Psoas muscle (tissue), 8 donors: ENCODE measurements at regions of chr12 and their contacts with region 1.

Region 1: DNA sequence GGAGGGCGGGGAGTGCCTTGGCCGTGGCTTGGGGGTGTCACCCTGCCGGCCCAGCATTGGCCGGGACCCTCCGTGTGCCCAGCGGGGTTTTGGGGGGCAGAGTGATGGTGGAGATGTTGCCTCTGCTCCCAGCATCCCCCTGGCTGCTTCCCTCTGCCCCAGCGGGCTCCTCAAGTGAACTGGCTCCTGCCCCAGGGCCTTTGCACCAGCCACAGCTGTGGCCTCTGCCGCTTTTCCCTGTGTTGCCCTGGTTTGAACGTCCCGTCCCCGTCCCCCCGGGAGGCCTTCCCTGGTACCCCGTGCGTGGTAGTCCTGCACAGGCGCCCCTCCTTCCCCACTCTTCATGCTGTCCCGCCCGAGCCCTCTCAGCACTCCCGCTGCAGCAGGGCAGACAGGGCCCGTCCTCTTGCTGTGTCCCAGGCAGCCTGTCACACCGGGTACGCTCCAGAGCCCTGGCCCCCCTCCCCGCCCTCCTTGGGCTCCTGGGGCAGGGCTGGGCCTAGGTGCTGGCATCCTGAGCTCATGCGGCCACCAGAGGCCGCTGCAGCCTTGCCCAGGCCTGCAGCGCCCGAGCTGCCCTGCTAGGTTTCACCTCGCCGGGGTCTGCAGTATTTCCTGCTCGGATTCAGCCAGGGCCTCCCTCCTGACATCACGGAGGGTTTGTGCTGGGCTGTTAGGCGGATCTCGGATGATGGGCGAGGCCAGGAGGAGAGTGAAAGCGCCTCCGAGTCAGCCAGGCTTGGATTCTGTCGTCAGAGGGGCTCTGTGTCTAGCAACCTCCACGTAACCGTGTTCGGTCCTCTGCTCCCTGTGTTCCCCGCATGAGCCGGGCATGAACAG is 9.5 kb downstream of the NOC4L start:
- DNase-seq: peak; percentile 61 to 80
- ATAC-seq: peak; percentile 90 to 94 (median 93)
- H3K4me3 ChIP-seq: peak overlapping the region; percentile 29
- H3K27ac ChIP-seq: no peak overlapping the region
- H3K4me1 ChIP-seq: no peaks in the 10 kb centered on the region
- H3K27me3 ChIP-seq: no peaks in the 10 kb centered on the region
- CTCF ChIP-seq: peak; percentile 85

Region 2: DNA sequence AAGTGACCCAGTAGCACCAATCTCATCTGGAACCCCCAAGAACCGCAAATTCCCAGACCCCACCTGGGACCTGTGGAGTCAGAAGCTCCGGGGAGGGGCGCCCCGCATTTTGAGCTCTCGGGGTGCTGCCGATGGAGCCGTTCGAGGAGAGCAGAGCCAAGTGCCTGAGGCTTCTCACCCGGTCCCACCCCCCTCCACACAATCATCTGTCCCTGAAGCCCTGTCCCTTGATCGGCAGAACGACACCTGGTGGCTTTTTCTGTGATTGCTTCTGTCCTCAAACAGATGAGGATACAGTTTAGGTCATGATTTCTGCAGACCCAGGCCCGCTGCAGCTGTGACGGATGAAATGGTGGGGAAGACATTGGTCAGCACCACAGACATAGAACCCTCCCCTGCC is 65.2 kb after region 1 on chr12:
- intact Hi-C with region 1: loop called in 1 of 2 experiments (anchors 2 kb)
- DNase-seq: no peak
- ATAC-seq: no peak
- H3K4me3 ChIP-seq: no peak overlapping the region
- H3K27ac ChIP-seq: no peak overlapping the region
- H3K4me1 ChIP-seq: no peaks in the 10 kb centered on the region
- H3K27me3 ChIP-seq: peaks cover 0 to 57% (median 10%) of the 10 kb centered on the region in 3 donors
- CTCF ChIP-seq: peak; percentile 17

Region 3: DNA sequence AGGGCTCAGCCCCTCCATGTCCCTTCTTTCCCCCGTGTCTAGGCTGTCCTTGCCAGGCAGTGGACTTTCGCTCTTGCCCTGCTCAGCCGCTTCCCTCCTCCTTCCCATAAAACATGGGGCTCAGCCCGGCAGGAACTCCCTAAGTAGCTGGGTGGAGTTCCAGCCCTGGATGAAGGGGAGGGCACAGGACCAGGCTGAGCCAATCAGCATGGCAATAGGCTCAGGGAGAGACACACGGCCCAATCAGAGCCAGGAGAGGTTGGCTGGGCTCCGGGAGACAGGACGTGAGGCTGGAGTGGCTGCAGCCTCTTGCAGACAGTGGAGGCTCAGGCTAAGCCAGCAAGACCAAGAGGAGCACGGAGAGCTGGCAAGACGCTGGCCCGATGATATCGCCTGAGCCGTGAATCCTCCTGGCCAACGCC is 121.4 kb after region 1 on chr12:
- intact Hi-C with region 1: no loop called
- DNase-seq: no peak
- ATAC-seq: no peak
- H3K4me3 ChIP-seq: no peak overlapping the region
- H3K27ac ChIP-seq: no peak overlapping the region
- H3K4me1 ChIP-seq: no peaks in the 10 kb centered on the region
- H3K27me3 ChIP-seq: peaks cover 0 to 94% (median 24%) of the 10 kb centered on the region in 3 donors
- CTCF ChIP-seq: no peak

Region 4: GRCh38 chr12:132414634-132415326 is 261.1 kb after region 1 on chr12:
- intact Hi-C with region 1: loop called in 1 of 2 experiments (anchors 2 kb)
- DNase-seq: peak; percentile 74 to 89
- ATAC-seq: peak; percentile 95 to 99 (median 97)
- H3K4me3 ChIP-seq: no peak overlapping the region
- H3K27ac ChIP-seq: no peak overlapping the region
- H3K4me1 ChIP-seq: no peaks in the 10 kb centered on the region
- H3K27me3 ChIP-seq: peaks cover 0 to 53% (median 9%) of the 10 kb centered on the region in 3 donors
- CTCF ChIP-seq: peak; percentile 91

Region 5: DNA sequence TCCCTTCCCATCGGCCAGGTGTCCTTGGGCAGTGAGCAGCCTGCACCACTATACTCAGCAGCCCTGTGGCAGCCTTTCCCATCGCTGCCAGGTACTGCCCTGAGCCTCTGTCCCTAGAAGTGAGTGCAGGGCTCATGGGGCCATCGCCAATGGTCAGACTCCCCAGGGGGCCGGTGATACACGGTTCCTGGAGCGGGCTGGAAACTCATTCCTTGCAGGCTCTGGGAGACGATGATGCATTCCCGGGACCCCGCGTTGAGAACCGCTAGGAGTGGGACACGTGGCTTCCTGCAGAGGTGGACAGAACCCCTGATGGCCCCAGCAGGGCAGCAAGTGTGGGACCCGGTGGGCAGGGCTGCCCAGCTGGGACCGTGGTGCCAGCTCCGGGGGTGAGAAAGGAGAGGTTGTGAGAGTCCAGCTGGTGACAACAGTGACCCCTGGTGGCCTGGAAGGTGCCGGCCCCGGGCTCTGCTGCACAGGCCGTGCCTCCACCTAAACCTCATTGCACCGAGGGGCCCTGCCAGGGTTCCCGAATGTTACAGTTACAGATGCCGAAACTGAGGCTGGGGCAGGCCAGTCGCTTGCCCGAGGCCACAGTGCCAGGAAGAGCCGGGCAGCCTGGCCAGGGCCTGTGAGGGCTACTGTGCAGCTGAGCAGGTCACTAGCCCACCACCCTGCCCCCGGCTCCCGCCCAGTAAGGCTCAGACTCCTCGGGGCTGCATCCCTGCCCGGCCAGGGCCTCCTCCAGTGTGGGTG is 370.0 kb after region 1 on chr12:
- intact Hi-C with region 1: loop called (anchors 1 to 10 kb)
- DNase-seq: peak; percentile 73 to 87
- ATAC-seq: peak; percentile 80 to 91 (median 84)
- H3K4me3 ChIP-seq: no peak overlapping the region
- H3K27ac ChIP-seq: no peak overlapping the region
- H3K4me1 ChIP-seq: peaks cover 4% of the 10 kb centered on the region
- H3K27me3 ChIP-seq: no peaks in the 10 kb centered on the region
- CTCF ChIP-seq: peak; percentile 88

Region 6: DNA sequence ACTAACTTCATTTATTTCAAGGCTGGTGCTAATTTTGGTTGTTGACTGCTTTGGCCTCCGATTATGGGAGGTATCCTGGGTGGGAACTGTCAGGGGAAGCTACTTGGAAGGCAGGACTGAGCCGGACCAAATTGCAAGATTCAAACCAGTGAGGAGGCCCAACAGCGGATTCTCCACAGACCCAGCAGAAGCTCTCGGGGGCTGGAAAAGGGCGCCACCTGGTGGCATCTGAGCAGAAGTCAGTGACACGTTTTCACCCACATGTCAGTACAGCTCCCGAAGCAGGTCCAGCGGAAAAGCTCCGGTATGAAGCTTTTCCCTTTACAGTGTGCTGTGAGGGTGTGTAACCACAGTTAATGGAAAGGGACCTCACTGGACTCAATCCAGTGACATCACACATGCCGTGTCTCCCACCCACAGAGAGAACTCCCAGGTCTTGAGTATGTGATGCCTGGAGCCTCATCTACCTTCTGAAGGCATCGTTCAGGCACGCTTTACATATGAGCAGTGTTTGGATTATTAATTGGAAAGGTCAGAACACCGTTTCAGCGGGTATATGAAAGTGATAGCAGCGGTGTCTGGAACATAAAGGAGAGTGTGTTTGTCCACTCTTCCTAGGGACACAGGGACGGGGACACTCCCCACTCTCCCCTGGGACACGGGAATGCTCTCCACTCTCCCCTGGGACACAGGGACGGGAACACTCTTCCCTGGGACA is 461.3 kb after region 1 on chr12:
- intact Hi-C with region 1: loop called in 1 of 2 experiments (anchors 10 kb)
- DNase-seq: peak; percentile 82 to 87
- ATAC-seq: peak; percentile 57 to 84 (median 72)
- H3K4me3 ChIP-seq: no peak overlapping the region
- H3K27ac ChIP-seq: no peak overlapping the region
- H3K4me1 ChIP-seq: no peaks in the 10 kb centered on the region
- H3K27me3 ChIP-seq: peaks cover 0 to 69% (median 35%) of the 10 kb centered on the region in 3 donors
- CTCF ChIP-seq: peak; percentile 72